Dorsolateral prefrontal cortex (tissue), 120 donors: ENCODE measurements at regions of chr1 and their contacts with region 1.

Region 1: GRCh38 chr1:153633716-153634665 is at the start of gene CHTOP:
- DNase-seq: peak; percentile 97 to 99 (median 99)
- H3K4me3 ChIP-seq: peak within 1 kb of the TSS; percentile 72 to 100 (median 93)
- H3K27ac ChIP-seq: peak within 1 kb of the TSS; percentile 80 to 100 (median 99)
- H3K27me3 ChIP-seq: no peaks in the 10 kb centered on the region
- CTCF ChIP-seq: peak in 36 of 56 donors; percentile 2 to 58 (median 24)
- total RNA-seq, gene CHTOP: 62.0 to 109 (median 76.4) TPM

Region 2: DNA sequence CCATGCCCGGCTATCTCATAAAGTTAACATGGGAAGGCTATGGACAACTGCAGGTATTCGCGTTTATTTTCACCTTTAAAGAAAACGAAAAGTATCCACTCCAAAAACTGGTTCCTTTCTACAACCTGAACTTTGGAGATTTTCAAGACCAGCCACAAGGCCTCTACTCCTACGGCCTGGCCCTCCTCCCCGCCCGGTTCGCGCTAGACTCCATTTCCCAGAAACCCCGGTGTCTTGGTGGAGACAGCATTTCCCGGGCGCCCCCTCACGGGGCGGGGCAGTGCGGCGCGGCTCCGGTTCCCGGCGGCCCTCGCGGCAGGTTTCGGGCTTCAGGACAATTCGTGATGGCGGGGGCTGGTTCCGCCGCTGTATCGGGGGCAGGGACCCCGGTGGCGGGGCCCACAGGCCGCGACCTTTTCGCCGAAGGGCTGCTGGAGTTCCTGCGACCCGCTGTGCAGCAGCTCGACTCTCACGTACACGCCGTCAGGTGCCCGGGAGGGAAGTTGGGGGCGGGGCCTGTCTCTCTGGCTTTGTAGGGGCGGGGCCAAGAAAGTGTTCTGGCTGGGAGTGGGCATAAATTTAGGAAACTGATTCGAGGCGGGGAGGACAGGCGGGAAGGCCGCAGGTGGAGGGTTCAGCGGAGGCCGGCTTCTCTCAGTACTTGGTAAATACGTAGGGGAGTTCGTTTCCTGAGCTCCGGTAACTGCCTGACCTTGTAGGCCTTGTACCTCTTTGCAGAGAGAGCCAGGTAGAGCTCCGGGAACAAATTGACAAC is 24.6 kb after region 1 on chr1 and contains the start of gene SNAPIN:
- intact Hi-C with region 1: loop called in 1 of 2 experiments (anchors 1 kb)
- DNase-seq: peak; percentile 83 to 95 (median 92)
- H3K4me3 ChIP-seq: peak within 1 kb of the TSS; percentile 51 to 99 (median 87)
- H3K27ac ChIP-seq: peak within 1 kb of the TSS; percentile 70 to 99 (median 95)
- H3K27me3 ChIP-seq: no peaks in the 10 kb centered on the region
- CTCF ChIP-seq: peak in 51 of 56 donors; percentile 4 to 67 (median 46)
- total RNA-seq, gene SNAPIN: 29.9 to 50.4 (median 39.0) TPM